ENCODE measurements at regions of chr19 and their contacts with region 1.

Region 1: GRCh38 chr19:52679598-52679997 is 41.4 kb upstream of the ZNF83 start:
- DNase-seq: peak in 2 of 4 experiments; percentile 15 to 20
- ATAC-seq: peak; percentile 63
- H3K4me3 ChIP-seq: no peak overlapping the region
- H3K27ac ChIP-seq: peak overlapping the region; percentile 10; the same call in 1 of the 3 replicates
- H3K4me1 ChIP-seq: peaks cover 6 to 18% of the 10 kb centered on the region in 2 experiments; a peak in 4 of 5 replicates
- H3K27me3 ChIP-seq: no peaks in the 10 kb centered on the region
- CTCF ChIP-seq: no peak
- EP300 ChIP-seq: no peak
- POLR2A ChIP-seq: no peak
- RAD21 ChIP-seq: no peak

Region 2: DNA sequence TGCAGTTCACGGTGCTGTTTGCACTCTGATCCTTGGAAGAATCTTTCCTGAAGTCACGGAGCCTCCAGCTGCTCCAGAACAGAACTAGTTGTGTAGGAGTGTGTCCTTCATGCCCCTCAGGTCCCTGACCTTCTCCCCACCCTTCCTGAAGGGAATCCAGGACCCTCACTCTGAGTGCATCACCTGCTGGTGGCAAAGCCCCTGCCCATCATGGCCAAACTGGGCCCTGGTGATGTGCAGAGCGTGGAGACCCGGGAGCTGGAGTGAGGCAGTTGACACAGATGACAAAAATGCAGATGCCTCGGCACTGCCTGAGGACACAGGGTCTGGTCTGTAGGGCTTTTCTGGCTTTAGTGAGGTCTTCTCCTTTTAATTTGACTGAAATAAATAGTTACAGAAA is 299.0 kb after region 1 on chr19:
- CTCF ChIA-PET with region 1: no interaction called
- POLR2A ChIA-PET with region 1: no interaction called
- in situ Hi-C with region 1: loop called (anchors 5 kb)
- intact Hi-C with region 1: no loop called
- DNase-seq: no peak
- ATAC-seq: no peak
- H3K4me3 ChIP-seq: no peak overlapping the region
- H3K27ac ChIP-seq: no peak overlapping the region
- H3K4me1 ChIP-seq: no peaks in the 10 kb centered on the region
- H3K27me3 ChIP-seq: no peaks in the 10 kb centered on the region
- CTCF ChIP-seq: no peak
- EP300 ChIP-seq: no peak
- POLR2A ChIP-seq: no peak
- RAD21 ChIP-seq: no peak

Measured in K562 (cell line).